Activated T-helper 1 cell treated with anti-CD3 and anti-CD28 coated beads, Interleukin-12 subunit alpha, Interleukin-12 subunit beta, Interleukin-2, Interleukin-4 antibody, amounts not matched to agents 30 ng/mL and 10 ng/mL and 1 ng/mL, durations not matched to agents 14 hours and 24 hours and 36 hours (primary cell): ENCODE measurements at regions of chr11 and their contacts with region 1.

Region 1: GRCh38 chr11:68632802-68633201 is 51.5 kb upstream of the GAL start:
- DNase-seq: peak; percentile 11
- H3K4me3 Mint-ChIP-seq: no peak overlapping the region
- H3K27ac Mint-ChIP-seq: no peak overlapping the region
- H3K4me1 Mint-ChIP-seq: no peaks in the 10 kb centered on the region
- H3K27me3 Mint-ChIP-seq: peaks cover 3% of the 10 kb centered on the region

Region 2: DNA sequence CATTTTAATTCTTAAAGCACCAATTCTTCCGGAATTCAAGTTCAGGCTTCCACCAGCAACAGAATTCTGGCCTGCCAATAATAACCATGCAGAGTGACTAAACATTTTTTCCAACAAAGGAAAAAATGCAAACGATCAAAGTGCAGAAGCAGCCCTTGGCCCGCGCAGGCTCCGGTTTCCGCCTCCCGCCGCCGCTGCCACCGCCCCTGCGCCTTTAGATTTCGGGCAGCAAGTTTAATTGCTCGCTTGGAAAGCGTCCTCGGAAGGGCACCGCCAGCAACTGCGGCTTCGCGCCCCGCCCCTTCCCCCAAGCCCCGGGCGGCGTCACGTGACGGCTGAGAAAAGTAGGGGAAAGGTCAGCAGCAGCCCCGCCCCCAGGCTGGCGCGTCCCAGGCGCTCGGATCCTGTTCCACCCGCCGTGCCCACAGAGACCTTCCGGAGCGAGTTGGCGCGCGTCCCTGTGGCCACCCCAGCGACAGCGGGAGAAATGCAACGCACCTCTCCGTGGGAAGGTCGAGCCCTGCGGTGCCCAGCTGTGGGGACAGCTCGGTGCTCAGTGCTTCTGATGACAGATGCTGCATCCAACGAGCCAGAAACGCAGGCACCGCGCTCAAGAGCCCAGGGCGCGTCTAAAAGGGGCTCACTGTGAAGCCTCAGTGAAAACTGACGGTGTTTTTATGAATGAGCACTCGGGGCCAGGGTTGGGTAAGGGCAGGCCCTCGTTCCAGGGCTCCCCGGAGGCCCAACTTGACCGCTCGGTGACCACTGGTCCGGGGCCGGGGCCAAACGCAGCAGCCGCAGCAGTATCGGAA is 206.5 kb after region 1 on chr11:
- intact Hi-C with region 1: loop called (anchors 5 kb)
- DNase-seq: peak; percentile 85
- H3K4me3 Mint-ChIP-seq: peak overlapping the region; percentile 70
- H3K27ac Mint-ChIP-seq: peak overlapping the region; percentile 73
- H3K4me1 Mint-ChIP-seq: peaks cover 50% of the 10 kb centered on the region
- H3K27me3 Mint-ChIP-seq: peaks cover 2% of the 10 kb centered on the region

Region 3: GRCh38 chr11:69088676-69089146 is 455.9 kb after region 1 on chr11:
- intact Hi-C with region 1: loop called (anchors 5 kb)
- DNase-seq: peak; percentile 32
- H3K4me3 Mint-ChIP-seq: no peak overlapping the region
- H3K27ac Mint-ChIP-seq: no peak overlapping the region
- H3K4me1 Mint-ChIP-seq: no peaks in the 10 kb centered on the region
- H3K27me3 Mint-ChIP-seq: no peaks in the 10 kb centered on the region